ENCODE measurements at regions of chr7 and their contacts with region 1.

Region 1: GRCh38 chr7:108569381-108570145 is at the starts of genes DNAJB9 and THAP5:
- DNase-seq: peak; percentile 100
- H3K4me3 ChIP-seq: peak within 1 kb of the TSS; percentile 74 to 93 (median 82)
- H3K27ac ChIP-seq: peak within 1 kb of the TSS; percentile 94 to 100 (median 96)
- H3K4me1 ChIP-seq: peaks cover 27 to 45% (median 37%) of the 10 kb centered on the region in 4 donors
- H3K27me3 ChIP-seq: no peaks in the 10 kb centered on the region
- CTCF ChIP-seq: peak in 1 of 3 experiments; percentile 28
- EP300 ChIP-seq: no peak
- POLR2A ChIP-seq: peak; percentile 79
- total RNA-seq, gene DNAJB9: 17.9 to 41.9 (median 28.0) TPM
- total RNA-seq, gene THAP5: 23.1 to 27.7 (median 27.3) TPM

Region 2: GRCh38 chr7:108222236-108222892 is 347.2 kb before region 1 on chr7:
- intact Hi-C with region 1: no loop called
- DNase-seq: no peak
- H3K4me3 ChIP-seq: no peak overlapping the region
- H3K27ac ChIP-seq: no peak overlapping the region
- H3K4me1 ChIP-seq: no peaks in the 10 kb centered on the region
- H3K27me3 ChIP-seq: peaks cover 0 to 4% (median 0%) of the 10 kb centered on the region in 4 donors
- CTCF ChIP-seq: no peak
- EP300 ChIP-seq: no peak
- POLR2A ChIP-seq: no peak

Region 3: DNA sequence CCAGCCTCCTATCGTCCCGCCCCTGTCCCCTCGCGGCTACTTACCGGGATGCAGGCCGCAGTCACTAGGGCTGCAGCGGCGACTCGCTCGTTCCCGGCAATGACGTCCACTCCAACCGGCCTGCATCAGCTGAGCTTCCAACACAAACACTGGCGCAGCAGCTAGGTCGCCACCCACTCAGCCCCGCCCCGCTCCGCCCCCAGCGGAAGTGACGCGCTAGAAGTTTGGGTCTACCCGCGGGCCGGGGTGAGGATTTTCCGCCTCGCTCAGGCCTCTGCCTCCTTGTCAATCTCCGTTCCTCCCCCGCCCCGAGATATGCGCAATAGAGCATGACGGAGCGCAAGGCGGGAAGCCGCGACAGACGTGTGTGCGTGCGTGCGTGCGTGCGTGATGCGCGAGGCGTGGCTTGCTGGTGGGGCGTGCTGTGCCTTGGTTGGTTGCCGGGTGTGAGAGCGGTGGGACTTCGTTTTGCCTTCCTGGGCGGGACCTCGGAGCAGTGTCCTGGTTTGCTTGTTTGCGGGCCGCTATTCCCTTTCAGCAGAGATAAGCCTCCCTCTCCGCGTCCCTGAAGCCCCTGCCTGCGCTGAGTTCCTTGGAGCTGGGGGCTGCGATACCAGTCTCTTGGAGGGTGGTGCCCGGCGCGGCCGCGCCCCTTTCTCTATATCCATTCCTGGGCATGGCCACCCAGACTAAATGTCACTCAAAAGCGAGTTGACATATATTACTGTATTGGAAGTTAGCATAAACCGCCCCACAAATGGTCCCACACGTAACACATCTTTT is 43.4 kb before region 1 on chr7 and contains the start of gene PNPLA8:
- intact Hi-C with region 1: loop called (anchors 1 kb)
- DNase-seq: peak; percentile 100
- H3K4me3 ChIP-seq: peak within 1 kb of the TSS; percentile 76 to 85 (median 78)
- H3K27ac ChIP-seq: peak within 1 kb of the TSS; percentile 95 to 98 (median 98)
- H3K4me1 ChIP-seq: peaks cover 30 to 46% (median 41%) of the 10 kb centered on the region in 4 donors
- H3K27me3 ChIP-seq: no peaks in the 10 kb centered on the region
- CTCF ChIP-seq: no peak
- EP300 ChIP-seq: peak; percentile 95
- POLR2A ChIP-seq: peak; percentile 89
- total RNA-seq, gene PNPLA8: 21.2 to 48.7 (median 32.6) TPM